ENCODE measurements at regions of chr20 and their contacts with region 1.

Region 1: DNA sequence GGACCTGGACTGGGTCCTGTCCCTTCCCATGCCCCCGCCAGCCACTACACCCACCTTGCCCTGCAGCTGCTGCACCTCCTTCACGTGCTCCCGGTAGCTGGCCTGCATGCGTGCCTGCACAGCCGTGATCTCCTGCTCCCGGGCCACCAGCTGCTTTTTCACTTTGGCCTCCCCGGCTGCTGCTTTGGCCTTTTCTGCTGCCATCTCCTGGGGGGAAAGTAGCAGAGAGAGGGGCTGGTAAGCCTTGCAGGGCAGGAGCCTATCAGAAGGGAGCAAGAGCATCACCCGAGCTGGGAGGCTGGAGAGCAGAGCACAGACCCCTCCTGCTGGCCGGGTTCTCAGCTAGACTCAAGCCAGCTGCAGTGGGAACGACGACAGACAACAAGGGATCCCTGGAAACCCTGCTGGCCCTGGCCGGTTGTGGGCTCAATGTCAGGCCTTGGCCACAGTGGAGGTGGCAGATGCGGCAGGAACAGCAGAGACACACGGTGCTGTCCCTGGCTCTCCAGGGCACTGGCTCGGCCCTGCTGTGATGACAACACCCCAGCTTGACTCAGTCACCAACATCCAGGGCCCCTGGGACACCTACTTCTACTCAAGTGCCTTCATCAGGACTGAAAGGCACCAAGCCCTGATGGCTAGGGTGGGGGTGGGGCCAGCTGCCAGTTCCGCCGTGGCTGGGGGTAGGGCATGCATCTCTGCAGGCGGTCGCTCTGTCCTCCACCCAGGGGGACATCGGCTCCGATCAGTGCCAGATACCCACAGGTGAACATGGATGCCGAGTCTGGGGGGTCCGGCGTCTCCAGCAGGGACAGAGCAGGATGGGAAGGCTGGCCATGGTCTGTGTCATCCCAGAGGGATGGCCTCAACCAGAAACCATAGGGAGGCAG is 45.3 kb downstream of the RRBP1 start:
- DNase-seq: peak; percentile 51
- ATAC-seq: peak; percentile 93
- H3K4me3 Mint-ChIP-seq: no peak overlapping the region
- H3K27ac Mint-ChIP-seq: peak overlapping the region; percentile 32; the same call in 1 of the 2 replicates
- H3K4me1 Mint-ChIP-seq: peaks cover 13% of the 10 kb centered on the region; the same call in 1 of the 2 replicates
- H3K27me3 Mint-ChIP-seq: no peaks in the 10 kb centered on the region
- CTCF ChIP-seq: no peak

Region 2: GRCh38 chr20:17525650-17526049 is 111.1 kb before region 1 on chr20:
- CTCF ChIA-PET with region 1: no interaction called
- POLR2A ChIA-PET with region 1: no interaction called
- DNase-seq: peak; percentile 36
- ATAC-seq: peak; percentile 93
- H3K4me3 Mint-ChIP-seq: no peak overlapping the region
- H3K27ac Mint-ChIP-seq: no peak overlapping the region
- H3K4me1 Mint-ChIP-seq: peaks cover 7% of the 10 kb centered on the region
- H3K27me3 Mint-ChIP-seq: peaks cover 14% of the 10 kb centered on the region
- CTCF ChIP-seq: no peak

Region 3: GRCh38 chr20:17589161-17589834 is 47.5 kb before region 1 on chr20:
- CTCF ChIA-PET with region 1: no interaction called
- POLR2A ChIA-PET with region 1: no interaction called
- DNase-seq: no peak
- ATAC-seq: no peak
- H3K4me3 Mint-ChIP-seq: no peak overlapping the region
- H3K27ac Mint-ChIP-seq: no peak overlapping the region
- H3K4me1 Mint-ChIP-seq: peaks cover 30% of the 10 kb centered on the region
- H3K27me3 Mint-ChIP-seq: no peaks in the 10 kb centered on the region
- CTCF ChIP-seq: no peak

Region 4: DNA sequence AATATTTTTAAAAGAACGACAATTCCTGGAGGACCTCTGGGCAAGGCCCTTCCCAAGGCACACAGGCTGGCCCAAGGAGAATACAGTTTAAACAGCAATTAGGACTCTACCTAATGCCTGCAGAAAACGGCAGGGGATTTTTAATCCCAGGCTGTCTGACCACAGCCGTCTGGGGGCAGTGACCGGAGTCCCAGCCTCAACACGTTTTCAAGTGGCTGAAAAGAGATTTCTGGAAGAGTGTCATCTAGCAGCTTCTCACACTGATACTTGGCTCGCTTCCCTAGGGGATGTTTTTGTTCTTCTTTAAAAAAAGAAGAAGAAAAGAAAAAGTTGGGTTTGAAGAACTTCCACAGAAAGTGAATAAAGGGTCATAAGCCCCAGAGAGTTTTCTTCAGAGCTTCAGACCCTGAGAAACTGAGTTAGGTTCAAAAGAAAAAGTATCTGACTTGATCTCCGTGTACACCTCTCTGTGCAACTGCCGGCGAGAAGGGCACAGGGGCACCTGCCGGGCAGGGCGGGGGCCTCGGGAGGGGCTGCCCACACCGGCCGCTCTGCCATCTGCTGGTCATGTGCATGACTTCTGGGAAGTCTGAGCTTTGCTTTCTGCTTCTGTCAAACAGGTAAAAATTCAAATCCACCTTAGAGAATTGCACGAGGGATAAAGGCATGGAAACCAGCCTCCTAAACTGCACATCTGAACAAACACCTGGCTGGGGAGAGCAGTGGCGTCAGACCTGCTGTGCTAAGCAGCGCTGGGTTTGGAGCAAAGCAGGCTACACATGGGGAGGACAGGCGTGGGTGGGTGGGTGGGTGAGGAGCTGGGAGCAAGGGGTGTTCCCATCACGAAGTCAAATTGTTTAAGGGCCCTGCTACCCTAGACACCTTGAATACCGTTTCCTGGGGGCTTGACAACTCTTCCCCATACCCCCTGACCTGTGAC is 12.3 kb after region 1 on chr20:
- CTCF ChIA-PET with region 1: interaction called, 11 read pairs
- POLR2A ChIA-PET with region 1: no interaction called
- DNase-seq: peak; percentile 41
- ATAC-seq: peak; percentile 60
- H3K4me3 Mint-ChIP-seq: no peak overlapping the region
- H3K27ac Mint-ChIP-seq: no peak overlapping the region
- H3K4me1 Mint-ChIP-seq: peaks cover 55% of the 10 kb centered on the region
- H3K27me3 Mint-ChIP-seq: no peaks in the 10 kb centered on the region
- CTCF ChIP-seq: peak; percentile 17; the same call in 1 of the 2 replicates